ENCODE measurements at regions of chr12 and their contacts with region 1.

Region 1: GRCh38 chr12:113184900-113185773 is at the starts of genes DDX54 and RITA1:
- DNase-seq: peak; percentile 85 to 86
- ATAC-seq: peak; percentile 89
- H3K4me3 ChIP-seq: peak within 1 kb of the TSS; percentile 87 to 100 (median 95)
- H3K27ac ChIP-seq: peak within 1 kb of the TSS; percentile 93 to 100 (median 98)
- H3K4me1 ChIP-seq: peaks cover 22 to 24% of the 10 kb centered on the region in 2 donors
- H3K27me3 ChIP-seq: no peaks in the 10 kb centered on the region
- CTCF ChIP-seq: peak in 1 of 5 experiments; percentile 18
- POLR2A ChIP-seq: peak; percentile 59 to 60
- total RNA-seq, gene DDX54: 90.0 to 144 (median 108) TPM
- total RNA-seq, gene RITA1: 17.7 to 31.2 (median 23.1) TPM

Region 2: GRCh38 chr12:113299619-113300237 is 114.6 kb after region 1 on chr12:
- in situ Hi-C with region 1: loop called in 2 of 4 experiments (anchors 10 to 25 kb)
- intact Hi-C with region 1: loop called (anchors 10 kb)
- DNase-seq: peak; percentile 23 to 71
- ATAC-seq: peak; percentile 57
- H3K4me3 ChIP-seq: no peak overlapping the region
- H3K27ac ChIP-seq: peak overlapping the region; percentile 76 to 89 (median 80)
- H3K4me1 ChIP-seq: peaks cover 27 to 30% of the 10 kb centered on the region in 2 donors
- H3K27me3 ChIP-seq: no peaks in the 10 kb centered on the region
- CTCF ChIP-seq: no peak
- POLR2A ChIP-seq: no peak

Region 3: DNA sequence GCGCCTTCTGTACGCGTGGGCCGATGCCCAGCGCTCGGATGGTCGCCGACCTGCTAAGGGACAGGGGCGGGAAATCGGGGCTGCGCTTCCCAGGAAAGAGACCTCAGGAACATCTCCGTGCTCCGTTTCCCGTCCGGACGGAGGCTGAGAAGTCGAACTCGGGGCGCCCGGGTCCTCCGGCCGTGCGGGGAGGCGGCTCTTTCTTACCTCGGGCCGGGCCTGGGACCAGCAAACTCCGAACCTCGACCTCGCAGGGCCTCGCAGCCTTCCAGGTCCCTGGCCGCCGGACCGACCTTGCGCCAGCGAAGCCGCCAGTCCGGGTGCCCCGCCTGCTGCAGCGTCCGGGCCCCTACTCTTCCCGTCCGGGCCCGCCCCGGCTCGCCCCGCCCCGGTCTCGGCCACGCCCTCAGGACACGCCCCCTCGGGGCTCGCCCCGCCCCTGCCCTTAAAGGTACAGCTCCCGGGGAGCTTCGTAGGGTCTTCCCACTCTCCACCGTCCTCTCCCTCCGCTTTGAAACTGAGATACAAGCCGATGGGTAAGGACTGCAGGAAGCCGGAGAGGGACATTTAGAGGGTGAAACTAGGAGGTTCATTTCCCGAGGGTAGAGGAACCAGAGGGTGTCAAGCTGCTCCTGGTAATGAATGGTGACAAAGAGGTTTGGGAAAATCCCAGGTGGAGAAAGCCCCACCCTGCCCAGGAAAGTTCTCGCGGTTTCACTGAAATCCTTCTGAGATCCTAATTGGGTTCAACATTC is 149.8 kb after region 1 on chr12 and contains the start of gene SLC8B1:
- in situ Hi-C with region 1: loop called in 1 of 4 experiments (anchors 10 kb)
- intact Hi-C with region 1: loop called (anchors 10 kb)
- DNase-seq: peak; percentile 74 to 85
- ATAC-seq: peak; percentile 90 to 95
- H3K4me3 ChIP-seq: peak within 1 kb of the TSS; percentile 77 to 85 (median 82)
- H3K27ac ChIP-seq: peak within 1 kb of the TSS; percentile 80 to 85 (median 82)
- H3K4me1 ChIP-seq: peaks cover 11 to 16% of the 10 kb centered on the region in 2 donors
- H3K27me3 ChIP-seq: no peaks in the 10 kb centered on the region
- CTCF ChIP-seq: no peak
- POLR2A ChIP-seq: peak; percentile 89 to 92
- total RNA-seq, gene SLC8B1: 8.2 to 21.2 (median 14.5) TPM

Region 4: GRCh38 chr12:113347892-113348291 is 162.8 kb after region 1 on chr12:
- in situ Hi-C with region 1: no loop called
- intact Hi-C with region 1: no loop called
- DNase-seq: no peak
- ATAC-seq: no peak
- H3K4me3 ChIP-seq: no peak overlapping the region
- H3K27ac ChIP-seq: no peak overlapping the region
- H3K4me1 ChIP-seq: no peaks in the 10 kb centered on the region
- H3K27me3 ChIP-seq: no peaks in the 10 kb centered on the region
- CTCF ChIP-seq: no peak
- POLR2A ChIP-seq: no peak

Region 5: DNA sequence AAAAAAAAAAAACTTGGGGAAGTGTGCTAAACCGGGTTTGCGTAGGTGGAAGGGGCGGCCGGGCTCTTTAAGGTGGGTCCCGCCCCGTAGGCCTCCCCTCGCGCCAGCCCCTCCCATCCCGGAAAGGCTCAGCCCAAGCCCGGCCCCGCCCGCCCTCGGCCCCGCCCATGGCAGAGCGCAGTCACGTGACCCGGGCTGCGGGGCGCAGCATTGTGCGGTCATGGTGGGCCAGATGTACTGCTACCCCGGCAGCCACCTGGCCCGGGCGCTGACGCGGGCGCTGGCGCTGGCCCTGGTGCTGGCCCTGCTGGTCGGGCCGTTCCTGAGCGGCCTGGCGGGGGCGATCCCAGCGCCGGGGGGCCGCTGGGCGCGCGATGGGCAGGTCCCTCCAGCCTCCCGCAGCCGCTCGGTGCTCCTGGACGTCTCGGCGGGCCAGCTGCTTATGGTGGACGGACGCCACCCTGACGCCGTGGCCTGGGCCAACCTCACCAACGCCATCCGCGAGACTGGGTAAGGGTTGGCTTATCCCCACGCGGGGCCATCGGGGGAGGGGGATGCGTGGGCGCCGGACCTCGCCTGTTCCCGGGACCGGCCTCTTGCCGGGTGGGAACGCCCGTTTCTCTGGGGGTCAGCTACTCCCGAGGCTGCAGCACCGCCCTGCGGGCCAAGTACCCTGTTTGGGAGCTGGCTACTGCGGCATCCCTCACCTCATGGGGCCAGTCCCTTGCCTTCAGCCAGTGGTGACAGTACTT is 173.4 kb after region 1 on chr12 and contains the start of gene PLBD2:
- in situ Hi-C with region 1: no loop called
- intact Hi-C with region 1: loop called (anchors 2 kb)
- DNase-seq: peak; percentile 92 to 93
- ATAC-seq: peak; percentile 94 to 95
- H3K4me3 ChIP-seq: peak within 1 kb of the TSS; percentile 66 to 91 (median 80)
- H3K27ac ChIP-seq: peak within 1 kb of the TSS; percentile 85 to 92 (median 90)
- H3K4me1 ChIP-seq: peaks cover 14% of the 10 kb centered on the region in 2 donors
- H3K27me3 ChIP-seq: no peaks in the 10 kb centered on the region
- CTCF ChIP-seq: peak in 1 of 5 experiments; percentile 20
- POLR2A ChIP-seq: peak; percentile 76 to 77
- total RNA-seq, gene PLBD2: 12.0 to 28.9 (median 26.8) TPM

Region 6: DNA sequence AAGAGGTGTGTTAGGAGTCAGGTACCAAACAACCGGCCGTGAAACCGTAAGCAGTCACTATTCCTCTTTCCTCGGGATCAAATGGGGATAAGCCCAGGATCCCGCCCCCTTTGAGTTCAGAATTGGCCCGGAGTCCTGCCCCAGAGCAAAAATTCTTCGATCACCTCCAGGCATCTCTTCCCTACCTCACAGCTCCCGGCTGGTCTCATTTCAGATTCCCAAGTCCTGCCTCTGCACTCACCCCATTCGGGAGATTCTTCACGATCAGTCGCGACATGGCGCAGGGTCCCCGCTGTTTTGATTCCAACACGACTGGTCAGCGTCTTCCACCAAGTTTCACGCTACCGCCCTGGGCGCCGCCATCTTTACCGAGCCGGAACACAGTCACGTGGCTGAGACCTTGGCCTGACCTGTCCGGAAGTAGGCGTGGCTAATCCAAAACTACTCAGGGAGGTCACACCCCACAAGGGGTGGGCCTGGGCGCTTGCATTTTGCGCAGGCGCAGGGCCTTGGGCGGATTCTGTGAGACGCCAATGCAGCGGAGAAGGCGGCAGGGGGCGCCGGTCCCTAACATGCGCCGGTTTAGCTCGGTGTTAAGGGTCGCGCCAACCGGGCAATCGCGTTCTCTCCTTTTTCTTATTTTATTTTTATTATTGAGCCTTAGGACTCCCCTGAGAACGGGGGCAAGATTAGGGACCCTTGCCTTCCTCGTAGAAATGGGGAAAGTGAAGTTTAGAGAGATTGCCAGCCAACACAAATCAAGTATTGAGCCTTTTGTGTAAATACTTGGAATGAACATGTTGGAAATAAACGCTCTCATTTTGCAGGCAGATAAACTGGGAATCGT is 781.0 kb after region 1 on chr12 and contains the start of gene RBM19:
- in situ Hi-C with region 1: no loop called
- intact Hi-C with region 1: loop called (anchors 1 kb)
- DNase-seq: peak; percentile 96
- ATAC-seq: peak; percentile 99
- H3K4me3 ChIP-seq: peak within 1 kb of the TSS; percentile 68 to 92 (median 82)
- H3K27ac ChIP-seq: peak within 1 kb of the TSS; percentile 68 to 73 (median 72)
- H3K4me1 ChIP-seq: peaks cover 16% of the 10 kb centered on the region in 2 donors
- H3K27me3 ChIP-seq: no peaks in the 10 kb centered on the region
- CTCF ChIP-seq: peak; percentile 84 to 94 (median 87)
- POLR2A ChIP-seq: peak in 1 of 2 donors; percentile 35
- total RNA-seq, gene RBM19: 21.2 to 28.3 (median 26.8) TPM